CD4-positive, alpha-beta T cell (primary cell): ENCODE measurements at regions of chr16 and their contacts with region 1.

Region 1: GRCh38 chr16:50273681-50274325 is 7.5 kb downstream of the ADCY7 start:
- DNase-seq: peak in 12 of 14 experiments; percentile 23 to 72 (median 34)
- ATAC-seq: peak; percentile 51
- H3K4me3 ChIP-seq: peak overlapping the region; percentile 73
- H3K4me3 Mint-ChIP-seq: peak overlapping the region; percentile 95
- H3K27ac ChIP-seq: peak overlapping the region; percentile 91 to 93
- H3K27ac Mint-ChIP-seq: peak overlapping the region; percentile 100
- H3K4me1 ChIP-seq: peaks cover 97% of the 10 kb centered on the region
- H3K4me1 Mint-ChIP-seq: peaks cover 99% of the 10 kb centered on the region
- H3K27me3 ChIP-seq: no peaks in the 10 kb centered on the region
- H3K27me3 Mint-ChIP-seq: no peaks in the 10 kb centered on the region
- CTCF ChIP-seq: no peak

Region 2: DNA sequence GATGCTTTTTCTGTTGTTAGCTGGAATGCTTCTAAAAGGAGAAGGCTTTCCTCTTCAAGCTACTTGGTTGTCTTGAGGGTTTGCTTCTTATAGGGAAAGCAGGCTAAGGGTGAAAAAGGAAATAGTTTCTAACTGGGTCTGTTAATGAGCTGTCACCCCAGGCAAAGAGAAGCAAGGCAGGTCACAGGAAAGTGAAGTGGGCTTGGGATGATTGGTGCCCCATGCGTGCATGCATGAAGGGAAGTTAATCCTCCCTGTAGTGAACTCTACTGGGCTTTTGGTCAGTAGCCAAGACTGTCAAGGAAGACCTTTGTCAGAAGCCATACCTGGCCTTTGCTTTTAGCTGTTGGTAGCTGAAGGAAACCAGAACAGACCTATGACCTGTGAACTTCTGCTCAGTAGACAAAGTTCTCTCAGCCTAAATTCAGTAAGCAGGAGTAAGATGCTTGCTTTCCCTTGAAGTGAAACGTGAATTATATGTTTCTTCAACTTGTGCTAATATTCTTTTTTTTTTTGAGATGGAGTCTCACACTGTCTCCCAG is 104.2 kb before region 1 on chr16:
- CTCF ChIA-PET with region 1: no interaction called
- POLR2A ChIA-PET with region 1: no interaction called
- intact Hi-C with region 1: no loop called
- DNase-seq: no peak
- ATAC-seq: no peak
- H3K4me3 ChIP-seq: no peak overlapping the region
- H3K4me3 Mint-ChIP-seq: no peak overlapping the region
- H3K27ac ChIP-seq: no peak overlapping the region
- H3K27ac Mint-ChIP-seq: peak overlapping the region; percentile 71
- H3K4me1 ChIP-seq: peaks cover 25% of the 10 kb centered on the region
- H3K4me1 Mint-ChIP-seq: peaks cover 76% of the 10 kb centered on the region
- H3K27me3 ChIP-seq: no peaks in the 10 kb centered on the region
- H3K27me3 Mint-ChIP-seq: no peaks in the 10 kb centered on the region
- CTCF ChIP-seq: no peak

Region 3: DNA sequence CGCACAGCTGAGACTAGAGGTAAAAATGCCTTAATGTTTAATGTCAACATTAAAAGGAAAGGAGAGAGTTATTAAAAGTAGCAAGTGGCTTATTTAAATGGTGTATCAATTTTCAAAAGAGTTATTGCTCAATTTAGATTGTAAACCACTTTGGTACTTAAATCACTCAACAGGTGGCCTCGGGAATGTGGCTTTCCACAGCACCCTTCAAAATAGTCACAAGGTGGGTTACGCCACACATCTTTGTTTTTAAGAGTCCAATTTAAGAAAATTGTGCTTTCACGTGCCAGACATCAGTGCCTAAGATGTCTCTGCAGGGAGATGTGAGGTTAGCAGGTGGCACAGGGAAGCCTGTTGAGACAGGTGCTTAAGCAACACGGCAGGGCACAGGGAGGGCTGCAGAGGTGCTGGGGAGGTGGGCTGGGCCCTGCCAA is 34.9 kb before region 1 on chr16:
- CTCF ChIA-PET with region 1: no interaction called
- POLR2A ChIA-PET with region 1: no interaction called
- intact Hi-C with region 1: no loop called
- DNase-seq: no peak
- ATAC-seq: no peak
- H3K4me3 ChIP-seq: no peak overlapping the region
- H3K4me3 Mint-ChIP-seq: no peak overlapping the region
- H3K27ac ChIP-seq: no peak overlapping the region
- H3K27ac Mint-ChIP-seq: no peak overlapping the region
- H3K4me1 ChIP-seq: no peaks in the 10 kb centered on the region
- H3K4me1 Mint-ChIP-seq: no peaks in the 10 kb centered on the region
- H3K27me3 ChIP-seq: no peaks in the 10 kb centered on the region
- H3K27me3 Mint-ChIP-seq: no peaks in the 10 kb centered on the region
- CTCF ChIP-seq: no peak

Region 4: GRCh38 chr16:50313596-50314478 is 40.0 kb after region 1 on chr16:
- CTCF ChIA-PET with region 1: no interaction called
- POLR2A ChIA-PET with region 1: interaction called, 32 read pairs
- intact Hi-C with region 1: loop called in 1 of 2 experiments (anchors 10 kb)
- DNase-seq: peak in 13 of 14 experiments; percentile 22 to 80 (median 60)
- ATAC-seq: peak; percentile 82
- H3K4me3 ChIP-seq: no peak overlapping the region
- H3K4me3 Mint-ChIP-seq: peak overlapping the region; percentile 57
- H3K27ac ChIP-seq: peak overlapping the region; percentile 17 to 52
- H3K27ac Mint-ChIP-seq: peak overlapping the region; percentile 91
- H3K4me1 ChIP-seq: peaks cover 45% of the 10 kb centered on the region
- H3K4me1 Mint-ChIP-seq: peaks cover 33% of the 10 kb centered on the region
- H3K27me3 ChIP-seq: no peaks in the 10 kb centered on the region
- H3K27me3 Mint-ChIP-seq: no peaks in the 10 kb centered on the region
- CTCF ChIP-seq: no peak

Region 5: GRCh38 chr16:50335196-50335958 is 61.6 kb after region 1 on chr16:
- CTCF ChIA-PET with region 1: no interaction called
- POLR2A ChIA-PET with region 1: interaction called, 17 read pairs
- intact Hi-C with region 1: loop called in 1 of 2 experiments (anchors 5 kb)
- DNase-seq: peak in 10 of 14 experiments; percentile 37 to 90 (median 50)
- ATAC-seq: peak; percentile 73
- H3K4me3 ChIP-seq: no peak overlapping the region
- H3K4me3 Mint-ChIP-seq: peak overlapping the region; percentile 80
- H3K27ac ChIP-seq: peak overlapping the region in 1 of 2 donors; percentile 25
- H3K27ac Mint-ChIP-seq: peak overlapping the region; percentile 98
- H3K4me1 ChIP-seq: peaks cover 41% of the 10 kb centered on the region
- H3K4me1 Mint-ChIP-seq: peaks cover 68% of the 10 kb centered on the region
- H3K27me3 ChIP-seq: no peaks in the 10 kb centered on the region
- H3K27me3 Mint-ChIP-seq: no peaks in the 10 kb centered on the region
- CTCF ChIP-seq: no peak